ENCODE measurements at regions of chr5 and their contacts with region 1.

Region 1: DNA sequence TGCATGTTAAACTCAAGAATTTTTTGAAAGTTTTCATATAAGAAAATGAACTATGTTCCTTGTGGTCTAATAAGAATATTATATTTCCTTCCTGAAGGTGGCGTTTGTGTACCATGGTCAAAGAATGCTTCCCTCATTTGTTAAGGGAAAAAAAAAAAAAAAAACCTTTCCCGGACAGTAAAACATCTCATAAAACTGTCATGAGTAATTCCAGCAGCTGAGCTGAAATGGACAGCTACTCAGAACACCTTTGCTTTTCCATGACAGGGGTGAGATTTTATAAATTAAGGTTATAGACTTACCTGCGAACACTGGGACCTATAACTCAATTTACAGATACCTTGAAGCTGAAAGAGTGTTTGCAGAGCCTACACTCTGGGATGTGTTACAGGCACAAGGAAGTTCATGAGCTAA is 113.2 kb upstream of the RANBP3L start:
- DNase-seq: no peak
- ATAC-seq: no peak
- H3K4me3 ChIP-seq: no peak overlapping the region
- H3K4me3 Mint-ChIP-seq: no peak overlapping the region
- H3K27ac ChIP-seq: no peak overlapping the region
- H3K27ac Mint-ChIP-seq: no peak overlapping the region
- H3K4me1 ChIP-seq: no peaks in the 10 kb centered on the region
- H3K4me1 Mint-ChIP-seq: peaks cover 1 to 11% (median 7%) of the 10 kb centered on the region in 7 donors
- H3K27me3 ChIP-seq: peaks cover 0 to 3% of the 10 kb centered on the region in 2 donors
- H3K27me3 Mint-ChIP-seq: peaks cover 0 to 14% (median 12%) of the 10 kb centered on the region in 5 donors

Region 2: GRCh38 chr5:36273809-36274526 is 140.9 kb before region 1 on chr5:
- CTCF ChIA-PET with region 1: no interaction called
- POLR2A ChIA-PET with region 1: no interaction called
- intact Hi-C with region 1: no loop called
- DNase-seq: no peak
- ATAC-seq: no peak
- H3K4me3 ChIP-seq: no peak overlapping the region
- H3K4me3 Mint-ChIP-seq: no peak overlapping the region
- H3K27ac ChIP-seq: no peak overlapping the region
- H3K27ac Mint-ChIP-seq: no peak overlapping the region
- H3K4me1 ChIP-seq: no peaks in the 10 kb centered on the region
- H3K4me1 Mint-ChIP-seq: peaks cover 0 to 1% (median 0%) of the 10 kb centered on the region in 7 donors
- H3K27me3 ChIP-seq: peaks cover 0 to 3% of the 10 kb centered on the region in 2 donors
- H3K27me3 Mint-ChIP-seq: peaks cover 0 to 32% (median 18%) of the 10 kb centered on the region in 5 donors

Region 3: GRCh38 chr5:36305571-36306326 is 109.1 kb before region 1 on chr5:
- CTCF ChIA-PET with region 1: no interaction called
- POLR2A ChIA-PET with region 1: no interaction called
- intact Hi-C with region 1: no loop called
- DNase-seq: peak in 3 of 9 donors; percentile 3 to 10 (median 4)
- ATAC-seq: peak; percentile 46
- H3K4me3 ChIP-seq: no peak overlapping the region
- H3K4me3 Mint-ChIP-seq: no peak overlapping the region
- H3K27ac ChIP-seq: no peak overlapping the region
- H3K27ac Mint-ChIP-seq: no peak overlapping the region
- H3K4me1 ChIP-seq: no peaks in the 10 kb centered on the region
- H3K4me1 Mint-ChIP-seq: peaks cover 0 to 12% (median 6%) of the 10 kb centered on the region in 7 donors
- H3K27me3 ChIP-seq: no peaks in the 10 kb centered on the region
- H3K27me3 Mint-ChIP-seq: peaks cover 11 to 25% (median 15%) of the 10 kb centered on the region in 5 donors

Region 4: DNA sequence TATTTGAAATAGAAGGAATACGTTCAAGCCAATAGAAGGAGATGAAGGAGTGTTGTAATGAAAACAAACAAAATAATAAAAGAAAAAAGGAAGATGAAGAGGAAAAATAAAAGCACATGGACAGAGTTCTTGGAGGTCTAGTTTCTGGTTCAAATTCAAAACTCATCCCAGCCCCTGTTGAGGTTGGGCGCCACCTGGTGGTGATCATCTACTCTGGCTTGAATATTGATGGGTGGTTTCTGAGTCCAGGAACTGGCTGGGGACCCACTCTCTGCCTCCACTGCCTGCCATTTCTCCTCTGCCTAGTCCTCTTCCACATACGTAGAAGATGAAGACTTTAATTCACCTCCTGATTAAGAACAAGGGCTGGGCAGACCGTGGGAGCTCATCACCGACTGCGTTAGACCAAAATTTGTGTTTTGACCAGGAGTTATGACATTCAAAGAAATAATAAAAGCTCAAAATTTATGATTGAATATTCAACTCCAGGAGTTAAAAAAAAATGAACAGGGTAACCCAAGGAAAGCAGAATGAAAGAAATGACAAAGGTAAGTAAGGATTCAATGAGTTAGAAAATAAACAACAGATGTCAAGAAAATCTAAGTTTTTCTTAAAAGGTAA is 92.6 kb after region 1 on chr5:
- CTCF ChIA-PET with region 1: no interaction called
- POLR2A ChIA-PET with region 1: no interaction called
- intact Hi-C with region 1: loop called in 1 of 2 experiments (anchors 1 kb)
- DNase-seq: peak; percentile 28 to 69 (median 50)
- ATAC-seq: peak; percentile 70
- H3K4me3 ChIP-seq: no peak overlapping the region
- H3K4me3 Mint-ChIP-seq: no peak overlapping the region
- H3K27ac ChIP-seq: no peak overlapping the region
- H3K27ac Mint-ChIP-seq: no peak overlapping the region
- H3K4me1 ChIP-seq: no peaks in the 10 kb centered on the region
- H3K4me1 Mint-ChIP-seq: peaks cover 0 to 3% (median 0%) of the 10 kb centered on the region in 7 donors
- H3K27me3 ChIP-seq: no peaks in the 10 kb centered on the region
- H3K27me3 Mint-ChIP-seq: peaks cover 10 to 34% (median 20%) of the 10 kb centered on the region in 5 donors

Region 5: DNA sequence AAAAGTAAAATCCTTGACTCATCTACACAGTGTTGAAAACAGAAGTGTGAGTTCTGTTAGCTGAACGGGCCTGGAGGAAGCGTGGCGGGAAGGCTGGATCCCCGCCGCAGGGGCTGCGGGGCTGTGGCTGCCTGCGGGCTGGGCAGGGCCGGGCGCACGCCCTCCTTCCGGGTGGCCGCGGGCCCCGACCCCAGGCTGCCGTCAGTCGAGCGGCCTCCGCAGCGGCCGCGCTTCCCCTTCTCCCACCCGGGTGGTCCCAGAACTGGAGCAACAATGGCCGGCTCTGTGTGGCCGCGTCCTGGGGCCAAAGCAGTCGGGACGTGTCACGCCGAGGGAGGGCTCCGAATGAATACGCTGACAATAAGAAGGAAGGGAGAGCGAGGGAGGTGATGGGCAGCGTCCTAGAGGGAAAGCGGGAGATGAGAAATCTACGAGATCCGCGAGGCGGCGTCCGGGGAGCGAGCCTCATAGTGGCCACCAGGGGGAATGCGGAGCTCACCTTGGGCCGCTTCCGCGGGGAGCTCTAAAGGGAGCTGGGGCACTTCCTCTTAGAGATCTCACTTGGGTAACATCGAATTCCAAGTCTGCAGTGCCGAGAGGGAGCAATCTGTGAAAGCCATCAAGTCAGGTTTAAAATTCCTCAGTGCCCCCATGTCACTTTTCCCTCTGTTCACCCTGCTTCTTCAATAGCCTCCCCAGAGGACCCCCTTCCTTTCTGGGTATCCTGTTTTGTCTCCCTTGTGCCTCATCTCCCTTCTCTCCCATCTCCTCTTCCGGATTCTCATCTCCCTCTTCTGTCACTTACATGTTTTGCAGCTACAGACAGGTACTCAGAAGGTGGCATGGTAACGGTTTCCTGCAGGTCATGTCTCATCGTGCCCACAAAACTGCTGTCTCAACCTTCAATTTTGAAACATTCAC is 275.4 kb after region 1 on chr5:
- CTCF ChIA-PET with region 1: no interaction called
- POLR2A ChIA-PET with region 1: no interaction called
- intact Hi-C with region 1: loop called in 1 of 2 experiments (anchors 5 kb)
- DNase-seq: peak; percentile 24 to 64 (median 43)
- ATAC-seq: peak; percentile 81
- H3K4me3 ChIP-seq: peak overlapping the region; percentile 73
- H3K4me3 Mint-ChIP-seq: peak overlapping the region; percentile 72 to 91 (median 86)
- H3K27ac ChIP-seq: no peak overlapping the region
- H3K27ac Mint-ChIP-seq: peak overlapping the region in 3 of 9 donors; percentile 19 to 45 (median 21)
- H3K4me1 ChIP-seq: peaks cover 5 to 8% of the 10 kb centered on the region in 2 donors
- H3K4me1 Mint-ChIP-seq: peaks cover 7 to 14% (median 12%) of the 10 kb centered on the region in 7 donors
- H3K27me3 ChIP-seq: no peaks in the 10 kb centered on the region
- H3K27me3 Mint-ChIP-seq: peaks cover 19 to 36% (median 33%) of the 10 kb centered on the region in 5 donors